HEK293 (cell line): ENCODE measurements at regions of chr17 and their contacts with region 1.

Region 1: GRCh38 chr17:58006924-58007780 is at the start of gene SRSF1:
- H3K4me3 ChIP-seq: peak within 1 kb of the TSS; percentile 94
- H3K27ac ChIP-seq: peak within 1 kb of the TSS; percentile 100
- H3K4me1 ChIP-seq: peaks cover 22% of the 10 kb centered on the region
- CTCF ChIP-seq: no peak

Region 2: GRCh38 chr17:57849874-57850754 is 157.0 kb before region 1 on chr17 and contains the start of gene MRPS23:
- CTCF ChIA-PET with region 1: interaction called, 434 read pairs
- POLR2A ChIA-PET with region 1: interaction called, 29 read pairs
- H3K4me3 ChIP-seq: peak within 1 kb of the TSS; percentile 99
- H3K27ac ChIP-seq: peak within 1 kb of the TSS; percentile 84
- H3K4me1 ChIP-seq: peaks cover 17% of the 10 kb centered on the region
- CTCF ChIP-seq: no peak

Region 3: DNA sequence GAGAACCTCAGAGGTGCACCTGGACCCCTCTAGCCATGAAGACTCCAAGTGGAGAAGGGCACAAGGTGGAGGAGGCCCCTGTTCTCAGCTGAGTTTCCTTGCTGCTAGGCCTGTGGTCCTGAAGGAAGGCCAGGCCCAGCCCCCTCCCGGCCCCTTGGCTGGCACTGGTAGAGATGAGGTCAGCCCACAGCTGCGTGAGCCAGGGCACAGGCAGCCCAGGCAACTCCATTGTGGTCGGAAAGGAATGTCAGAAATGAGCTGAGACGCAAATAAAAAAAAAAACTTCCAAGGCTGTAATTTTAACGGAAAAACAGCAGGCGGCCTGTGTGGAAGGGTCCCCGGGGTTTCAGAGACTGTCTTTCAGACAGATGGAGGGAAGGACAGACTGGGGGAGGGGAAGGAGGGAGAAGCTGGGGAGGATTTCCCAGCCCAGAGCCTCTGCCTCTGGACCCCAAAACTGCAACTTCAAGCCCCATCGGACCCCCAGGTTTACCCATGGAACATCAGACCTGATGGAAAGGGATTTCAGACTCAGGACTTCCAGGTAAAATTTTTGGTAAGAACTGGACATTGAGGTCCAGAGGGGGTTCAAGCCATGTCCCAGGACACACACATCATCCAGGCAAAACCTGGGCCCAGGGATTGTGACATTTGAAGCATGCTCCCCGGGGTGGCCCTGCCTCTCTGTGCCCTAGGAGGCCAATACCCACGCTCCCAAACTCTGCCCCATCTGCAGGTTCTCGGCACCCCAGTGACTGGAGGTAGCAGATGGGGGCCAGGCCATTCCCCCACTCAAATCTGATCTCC is 131.6 kb before region 1 on chr17:
- CTCF ChIA-PET with region 1: no interaction called
- POLR2A ChIA-PET with region 1: interaction called, 32 read pairs
- H3K4me3 ChIP-seq: no peak overlapping the region
- H3K27ac ChIP-seq: peak overlapping the region; percentile 87
- H3K4me1 ChIP-seq: peaks cover 21% of the 10 kb centered on the region
- CTCF ChIP-seq: peak; percentile 65

Region 4: GRCh38 chr17:57955183-57955931 is 51.8 kb before region 1 on chr17 and contains the start of gene CUEDC1:
- CTCF ChIA-PET with region 1: interaction called, 5 read pairs
- POLR2A ChIA-PET with region 1: interaction called, 19 read pairs
- H3K4me3 ChIP-seq: peak within 1 kb of the TSS; percentile 52
- H3K27ac ChIP-seq: peak within 1 kb of the TSS; percentile 98
- H3K4me1 ChIP-seq: peaks cover 40% of the 10 kb centered on the region
- CTCF ChIP-seq: no peak

Region 5: GRCh38 chr17:57965521-57966160 is 41.5 kb before region 1 on chr17:
- CTCF ChIA-PET with region 1: no interaction called
- POLR2A ChIA-PET with region 1: no interaction called
- H3K4me3 ChIP-seq: no peak overlapping the region
- H3K27ac ChIP-seq: no peak overlapping the region
- H3K4me1 ChIP-seq: peaks cover 3% of the 10 kb centered on the region; the same call in 1 of the 2 replicates
- CTCF ChIP-seq: no peak

Region 6: DNA sequence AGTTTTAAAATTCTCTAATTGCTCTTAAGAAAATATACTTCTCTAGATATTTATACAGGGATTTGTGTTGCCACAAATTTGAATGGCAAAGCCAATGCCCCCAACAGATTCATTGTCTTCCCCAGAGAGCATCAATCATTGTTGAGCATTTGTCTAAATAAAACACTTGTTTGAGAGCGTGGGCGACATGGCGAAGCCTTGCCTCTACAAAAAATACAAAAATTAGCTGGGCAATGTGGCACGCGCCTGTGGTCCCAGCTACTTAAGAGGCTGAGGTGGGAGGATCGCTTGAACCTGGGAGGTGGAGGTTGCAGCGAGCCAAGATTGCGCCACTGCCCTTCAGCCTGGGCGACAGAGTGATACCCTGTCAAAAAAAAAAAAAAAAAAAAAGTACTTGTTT is 13.2 kb after region 1 on chr17:
- CTCF ChIA-PET with region 1: interaction called, 4 read pairs
- POLR2A ChIA-PET with region 1: interaction called, 15 read pairs
- H3K4me3 ChIP-seq: no peak overlapping the region
- H3K27ac ChIP-seq: no peak overlapping the region
- H3K4me1 ChIP-seq: peaks cover 15% of the 10 kb centered on the region
- CTCF ChIP-seq: no peak

Region 7: DNA sequence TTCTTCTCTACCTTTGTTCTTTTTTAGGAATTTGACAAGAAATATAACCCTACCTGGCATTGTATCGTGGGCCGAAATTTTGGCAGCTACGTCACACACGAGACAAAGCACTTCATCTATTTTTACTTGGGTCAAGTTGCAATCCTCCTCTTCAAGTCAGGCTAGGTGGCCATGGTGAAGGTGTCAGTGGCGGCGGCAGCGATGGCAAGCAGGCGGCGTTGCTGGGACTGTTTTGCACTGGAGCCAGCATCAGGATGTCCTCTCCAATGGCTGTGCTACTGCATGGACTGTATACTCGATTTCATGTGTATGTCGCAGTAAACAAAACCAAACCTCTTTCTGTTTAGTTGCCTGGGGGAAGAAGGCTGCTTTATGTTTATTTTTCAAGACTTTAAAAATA is 82.0 kb after region 1 on chr17:
- CTCF ChIA-PET with region 1: interaction called, 3 read pairs
- POLR2A ChIA-PET with region 1: interaction called, 101 read pairs
- H3K4me3 ChIP-seq: no peak overlapping the region
- H3K27ac ChIP-seq: no peak overlapping the region
- H3K4me1 ChIP-seq: peaks cover 14% of the 10 kb centered on the region
- CTCF ChIP-seq: no peak

Region 8: GRCh38 chr17:58219001-58219788 is 212.0 kb after region 1 on chr17 and contains the start of gene MKS1:
- CTCF ChIA-PET with region 1: no interaction called
- POLR2A ChIA-PET with region 1: no interaction called
- H3K4me3 ChIP-seq: peak within 1 kb of the TSS; percentile 79
- H3K27ac ChIP-seq: peak within 1 kb of the TSS; percentile 14; the same call in 1 of the 2 replicates
- H3K4me1 ChIP-seq: no peaks in the 10 kb centered on the region
- CTCF ChIP-seq: peak; percentile 94

Region 9: DNA sequence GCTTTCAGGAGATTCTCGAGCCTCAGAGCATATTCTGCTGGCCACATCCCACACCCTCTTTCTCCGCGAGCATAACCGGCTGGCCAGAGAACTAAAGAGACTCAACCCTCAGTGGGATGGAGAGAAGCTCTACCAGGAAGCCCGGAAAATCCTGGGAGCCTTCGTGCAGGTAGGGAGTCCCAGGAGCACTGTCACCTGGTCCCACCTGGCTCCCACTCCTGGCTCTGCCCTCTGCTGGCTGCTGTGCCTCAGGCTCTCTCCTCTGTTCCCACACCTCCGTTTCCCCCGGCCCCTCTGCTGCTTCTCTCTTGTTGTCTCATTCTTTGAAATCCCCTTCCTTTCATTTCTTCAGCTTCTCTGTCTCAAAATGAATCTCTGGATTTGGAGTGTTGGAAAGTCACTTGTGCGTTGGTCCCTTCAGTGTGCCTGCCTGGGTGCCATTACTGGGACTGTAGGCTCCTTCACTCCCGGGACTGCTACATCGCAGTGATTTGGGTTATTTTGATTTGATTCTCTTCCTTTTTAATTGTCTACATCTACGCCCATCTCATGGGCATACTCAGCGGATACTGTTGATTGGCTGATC is 247.7 kb after region 1 on chr17:
- CTCF ChIA-PET with region 1: no interaction called
- POLR2A ChIA-PET with region 1: no interaction called
- H3K4me3 ChIP-seq: no peak overlapping the region
- H3K27ac ChIP-seq: no peak overlapping the region
- H3K4me1 ChIP-seq: no peaks in the 10 kb centered on the region
- CTCF ChIP-seq: no peak